ENCODE measurements at regions of chr1 and their contacts with region 1.

Region 1: GRCh38 chr1:75265792-75266191 is 131.6 kb downstream of the LHX8 start:
- DNase-seq: no peak
- H3K4me3 Mint-ChIP-seq: no peak overlapping the region
- H3K27ac Mint-ChIP-seq: no peak overlapping the region
- H3K4me1 Mint-ChIP-seq: no peaks in the 10 kb centered on the region
- H3K27me3 Mint-ChIP-seq: no peaks in the 10 kb centered on the region

Region 2: DNA sequence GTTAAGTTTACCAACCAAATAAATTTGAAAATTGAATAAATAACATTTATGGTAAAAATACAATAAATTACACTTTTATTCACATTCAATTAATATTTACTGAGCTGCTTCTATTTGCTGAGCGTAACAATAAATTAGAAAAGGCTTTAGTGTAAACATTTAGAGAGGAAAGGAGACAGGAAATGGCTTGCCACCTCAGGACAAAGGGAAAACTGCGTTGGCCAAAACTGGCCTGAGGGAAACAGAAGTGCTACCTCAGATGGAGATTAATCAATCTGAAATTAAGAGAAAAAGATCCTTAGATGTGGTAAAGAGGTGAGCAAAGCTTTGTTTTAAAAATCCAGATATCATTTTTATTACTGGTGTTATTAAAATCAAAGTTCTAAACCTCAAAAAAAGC is 217.2 kb after region 1 on chr1:
- intact Hi-C with region 1: no loop called
- DNase-seq: no peak
- H3K4me3 Mint-ChIP-seq: no peak overlapping the region
- H3K27ac Mint-ChIP-seq: no peak overlapping the region
- H3K4me1 Mint-ChIP-seq: no peaks in the 10 kb centered on the region
- H3K27me3 Mint-ChIP-seq: no peaks in the 10 kb centered on the region

Region 3: GRCh38 chr1:75632350-75632949 is 366.7 kb after region 1 on chr1:
- intact Hi-C with region 1: loop called (anchors 10 kb)
- DNase-seq: no peak
- H3K4me3 Mint-ChIP-seq: no peak overlapping the region
- H3K27ac Mint-ChIP-seq: no peak overlapping the region
- H3K4me1 Mint-ChIP-seq: no peaks in the 10 kb centered on the region
- H3K27me3 Mint-ChIP-seq: no peaks in the 10 kb centered on the region